B cell (primary cell): ENCODE measurements at regions of chr10 and their contacts with region 1.

Region 1: DNA sequence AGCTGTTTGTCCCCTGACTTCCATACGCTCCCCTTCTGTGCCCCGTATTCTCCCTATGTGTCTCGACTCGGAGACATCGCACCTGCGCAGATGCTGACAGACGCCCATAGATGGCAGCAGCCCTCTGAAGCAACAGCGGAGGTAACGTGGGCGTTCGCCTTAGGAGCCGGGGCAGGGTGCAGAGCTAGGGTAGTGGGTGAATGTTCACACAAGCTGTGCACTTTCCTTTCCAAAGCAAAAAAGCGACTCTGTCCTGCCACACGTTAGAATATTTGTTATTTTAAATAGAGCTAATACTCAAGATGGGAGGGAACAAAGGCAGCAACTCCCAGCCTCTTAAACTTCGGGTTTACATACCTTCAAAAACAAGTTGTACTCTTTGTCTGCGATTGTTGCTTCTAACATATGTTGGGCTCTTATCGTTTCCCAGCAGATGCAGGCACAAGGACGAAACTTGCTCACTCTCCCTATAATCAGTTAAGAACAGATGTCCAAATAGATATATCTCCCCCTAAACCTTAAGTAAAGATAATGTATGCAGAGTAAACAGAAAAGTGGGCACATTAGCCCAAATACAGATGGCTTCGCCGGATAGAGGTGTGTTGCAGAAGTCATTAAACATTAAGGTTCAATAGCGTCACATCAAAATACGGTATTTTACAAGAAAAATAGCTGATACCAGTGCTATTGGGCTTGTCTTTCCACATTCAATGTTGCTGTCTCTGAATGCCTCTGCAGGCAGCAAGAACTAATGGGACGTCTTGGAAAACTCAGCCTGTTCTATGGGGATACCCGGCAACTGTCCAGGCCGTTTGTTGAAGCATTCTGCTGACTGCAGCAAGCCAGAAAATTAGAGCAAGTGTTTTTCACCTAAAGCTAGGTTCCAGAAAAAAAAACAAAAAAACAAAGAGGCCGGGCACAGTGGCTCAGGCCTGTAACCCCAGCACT is 340.3 kb upstream of the PRKCQ start:
- DNase-seq: peak; percentile 81
- ATAC-seq: peak; percentile 97
- H3K4me3 ChIP-seq: peak overlapping the region in 1 of 5 experiments; percentile 9
- H3K4me3 Mint-ChIP-seq: no peak overlapping the region
- H3K27ac ChIP-seq: no peak overlapping the region
- H3K27ac Mint-ChIP-seq: no peak overlapping the region
- H3K4me1 ChIP-seq: peaks cover 8 to 27% of the 10 kb centered on the region in 2 donors
- H3K4me1 Mint-ChIP-seq: peaks cover 24% of the 10 kb centered on the region
- H3K27me3 ChIP-seq: no peaks in the 10 kb centered on the region
- H3K27me3 Mint-ChIP-seq: no peaks in the 10 kb centered on the region
- CTCF ChIP-seq: peak; percentile 80

Region 2: DNA sequence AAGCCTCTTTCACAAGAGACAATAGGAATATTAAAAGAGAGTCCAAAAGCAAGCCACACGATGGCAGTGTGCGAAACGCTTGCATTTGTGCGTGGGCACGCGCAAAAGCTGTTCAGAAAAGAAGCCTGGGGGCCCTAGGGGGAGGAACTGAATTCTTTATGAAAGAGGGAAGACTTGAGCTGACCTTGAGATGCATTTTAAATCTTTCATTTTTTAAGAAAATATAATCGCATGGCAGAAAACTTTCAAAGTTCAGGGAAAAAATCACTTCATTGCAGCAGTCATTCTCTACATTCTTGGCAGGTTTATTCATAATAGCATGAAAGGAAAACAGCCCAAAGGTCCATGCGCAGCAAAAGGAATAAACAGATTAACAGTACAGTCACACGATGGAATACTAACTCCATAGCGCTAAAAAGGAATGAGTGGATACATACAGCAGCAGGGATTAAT is 133.7 kb before region 1 on chr10:
- CTCF ChIA-PET with region 1: no interaction called
- POLR2A ChIA-PET with region 1: no interaction called
- intact Hi-C with region 1: no loop called
- DNase-seq: no peak
- ATAC-seq: no peak
- H3K4me3 ChIP-seq: no peak overlapping the region
- H3K4me3 Mint-ChIP-seq: no peak overlapping the region
- H3K27ac ChIP-seq: no peak overlapping the region
- H3K27ac Mint-ChIP-seq: no peak overlapping the region
- H3K4me1 ChIP-seq: peaks cover 6% of the 10 kb centered on the region in 2 donors
- H3K4me1 Mint-ChIP-seq: peaks cover 8% of the 10 kb centered on the region
- H3K27me3 ChIP-seq: peaks cover 0 to 7% (median 1%) of the 10 kb centered on the region in 4 experiments
- H3K27me3 Mint-ChIP-seq: peaks cover 22% of the 10 kb centered on the region
- CTCF ChIP-seq: no peak

Region 3: GRCh38 chr10:6973899-6974298 is 53.6 kb after region 1 on chr10:
- CTCF ChIA-PET with region 1: interaction called, 3 read pairs
- POLR2A ChIA-PET with region 1: no interaction called
- intact Hi-C with region 1: loop called (anchors 5 kb)
- DNase-seq: no peak
- ATAC-seq: no peak
- H3K4me3 ChIP-seq: no peak overlapping the region
- H3K4me3 Mint-ChIP-seq: no peak overlapping the region
- H3K27ac ChIP-seq: no peak overlapping the region
- H3K27ac Mint-ChIP-seq: no peak overlapping the region
- H3K4me1 ChIP-seq: no peaks in the 10 kb centered on the region
- H3K4me1 Mint-ChIP-seq: no peaks in the 10 kb centered on the region
- H3K27me3 ChIP-seq: no peaks in the 10 kb centered on the region
- H3K27me3 Mint-ChIP-seq: peaks cover 3% of the 10 kb centered on the region
- CTCF ChIP-seq: no peak

Region 4: DNA sequence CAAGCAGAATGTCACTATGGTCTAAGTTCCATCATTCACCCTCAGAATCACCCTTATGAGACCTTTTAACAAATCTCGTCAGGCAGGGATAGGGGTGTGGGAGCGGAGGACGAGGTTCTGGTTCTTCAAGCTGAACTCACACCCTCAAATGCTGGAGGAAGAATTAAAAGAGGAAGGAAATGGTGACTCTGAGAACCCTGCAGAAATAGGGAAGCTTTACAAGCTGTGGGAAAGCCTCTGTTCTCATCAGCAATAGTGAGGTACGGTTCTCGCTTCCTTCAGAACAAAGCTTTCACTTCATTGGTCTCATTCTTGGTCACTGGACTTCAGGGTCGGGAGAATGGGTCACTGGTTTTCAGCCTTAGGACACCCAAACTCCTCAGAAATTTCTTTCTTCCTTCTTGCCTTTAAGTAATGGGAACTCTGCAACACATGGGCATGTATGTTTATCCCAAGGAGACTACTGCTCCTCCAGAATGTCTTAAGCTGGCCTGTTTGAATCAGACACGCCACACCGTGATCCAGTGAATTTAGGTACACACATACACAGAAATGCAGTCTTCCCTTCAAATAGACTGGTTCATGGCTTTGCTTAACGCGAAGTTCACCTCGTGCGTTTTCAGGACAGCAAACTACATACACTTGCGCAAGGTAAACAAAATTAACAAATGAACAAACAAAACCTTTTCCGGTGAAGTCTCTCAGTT is 264.5 kb after region 1 on chr10:
- CTCF ChIA-PET with region 1: interaction called, 4 read pairs
- POLR2A ChIA-PET with region 1: no interaction called
- intact Hi-C with region 1: loop called (anchors 10 kb)
- DNase-seq: peak; percentile 72
- ATAC-seq: peak; percentile 80
- H3K4me3 ChIP-seq: peak overlapping the region in 4 of 5 experiments; percentile 4 to 52 (median 16)
- H3K4me3 Mint-ChIP-seq: peak overlapping the region; percentile 59
- H3K27ac ChIP-seq: peak overlapping the region; percentile 59 to 68
- H3K27ac Mint-ChIP-seq: peak overlapping the region; percentile 64
- H3K4me1 ChIP-seq: peaks cover 21 to 26% of the 10 kb centered on the region in 2 donors
- H3K4me1 Mint-ChIP-seq: peaks cover 35% of the 10 kb centered on the region
- H3K27me3 ChIP-seq: no peaks in the 10 kb centered on the region
- H3K27me3 Mint-ChIP-seq: no peaks in the 10 kb centered on the region
- CTCF ChIP-seq: no peak

Region 5: DNA sequence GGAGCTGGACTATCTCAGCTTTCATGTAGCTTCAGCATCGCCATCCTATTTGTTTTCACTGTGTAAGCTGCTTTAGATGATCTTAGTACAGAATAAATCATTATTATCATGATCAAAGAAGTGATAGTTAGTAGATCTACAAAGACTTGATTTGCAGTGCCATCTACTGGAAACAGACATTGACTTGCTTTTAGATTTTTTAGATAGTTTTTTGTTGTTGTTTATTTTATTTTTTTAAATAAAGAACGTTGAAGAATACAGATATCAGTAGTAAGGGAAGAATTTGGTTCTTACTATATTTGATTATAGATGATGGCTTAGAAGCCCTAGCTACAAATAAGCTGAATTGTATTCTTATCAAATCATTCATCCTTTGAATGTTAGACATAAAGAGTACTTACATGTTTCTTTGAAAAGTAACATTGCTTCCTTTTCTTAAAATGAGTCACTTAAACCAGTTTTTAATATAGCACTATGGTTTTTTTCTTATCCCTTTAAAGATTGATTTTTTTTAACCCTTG is 496.8 kb after region 1 on chr10:
- CTCF ChIA-PET with region 1: interaction called, 32 read pairs
- POLR2A ChIA-PET with region 1: no interaction called
- intact Hi-C with region 1: loop called (anchors 1 kb)
- DNase-seq: peak; percentile 66
- ATAC-seq: peak; percentile 24
- H3K4me3 ChIP-seq: no peak overlapping the region
- H3K4me3 Mint-ChIP-seq: no peak overlapping the region
- H3K27ac ChIP-seq: no peak overlapping the region
- H3K27ac Mint-ChIP-seq: no peak overlapping the region
- H3K4me1 ChIP-seq: peaks cover 5 to 9% of the 10 kb centered on the region in 2 donors
- H3K4me1 Mint-ChIP-seq: peaks cover 8% of the 10 kb centered on the region
- H3K27me3 ChIP-seq: peaks cover 0 to 9% (median 4%) of the 10 kb centered on the region in 4 experiments
- H3K27me3 Mint-ChIP-seq: peaks cover 5% of the 10 kb centered on the region
- CTCF ChIP-seq: peak; percentile 77

Region 6: DNA sequence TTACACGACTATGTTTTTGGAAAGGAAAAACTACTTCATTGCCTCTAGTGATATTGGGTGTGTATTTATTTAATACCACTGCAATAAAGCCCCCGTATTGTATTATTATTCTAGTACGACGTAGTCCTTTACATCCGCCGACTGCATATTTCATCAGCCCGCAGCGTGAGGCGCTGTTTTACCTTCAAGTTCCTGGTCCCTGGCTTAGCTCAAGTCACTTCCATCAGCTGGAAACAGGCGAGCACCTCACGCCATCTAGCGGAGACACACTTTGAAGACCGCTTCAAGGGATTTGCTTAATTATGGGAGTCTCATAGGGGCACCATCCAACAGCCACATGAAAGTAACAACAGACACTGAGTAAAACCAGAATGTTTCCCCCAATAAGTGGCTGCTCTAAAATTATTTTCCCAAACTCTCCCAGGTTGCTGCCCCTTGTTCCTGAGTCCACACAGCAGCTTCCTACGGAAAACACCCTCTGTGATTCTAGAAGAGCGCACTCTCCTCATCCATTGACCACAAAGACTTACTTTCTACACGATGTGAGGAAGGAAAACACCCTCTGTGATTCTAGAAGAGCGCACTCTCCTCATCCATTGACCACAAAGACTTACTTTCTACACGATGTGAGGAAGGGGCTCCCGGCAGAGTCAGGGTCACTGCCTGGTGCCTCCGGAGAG is 767.0 kb after region 1 on chr10:
- CTCF ChIA-PET with region 1: interaction called, 13 read pairs
- POLR2A ChIA-PET with region 1: no interaction called
- intact Hi-C with region 1: loop called (anchors 10 kb)
- DNase-seq: peak; percentile 81
- ATAC-seq: peak; percentile 85
- H3K4me3 ChIP-seq: no peak overlapping the region
- H3K4me3 Mint-ChIP-seq: no peak overlapping the region
- H3K27ac ChIP-seq: no peak overlapping the region
- H3K27ac Mint-ChIP-seq: no peak overlapping the region
- H3K4me1 ChIP-seq: no peaks in the 10 kb centered on the region
- H3K4me1 Mint-ChIP-seq: peaks cover 3% of the 10 kb centered on the region
- H3K27me3 ChIP-seq: peaks cover 0 to 7% (median 0%) of the 10 kb centered on the region in 4 experiments
- H3K27me3 Mint-ChIP-seq: peaks cover 10% of the 10 kb centered on the region
- CTCF ChIP-seq: peak; percentile 76